ENCODE measurements at regions of chr11 and their contacts with region 1.

Region 1: GRCh38 chr11:76860539-76861475 is at the start of gene ACER3:
- DNase-seq: peak; percentile 91
- H3K4me3 Mint-ChIP-seq: peak within 1 kb of the TSS; percentile 80
- H3K27ac Mint-ChIP-seq: no peak within 1 kb of the TSS
- H3K4me1 Mint-ChIP-seq: peaks cover 15% of the 10 kb centered on the region
- H3K27me3 Mint-ChIP-seq: no peaks in the 10 kb centered on the region
- total RNA-seq, gene ACER3: 10.5 to 10.9 TPM

Region 2: DNA sequence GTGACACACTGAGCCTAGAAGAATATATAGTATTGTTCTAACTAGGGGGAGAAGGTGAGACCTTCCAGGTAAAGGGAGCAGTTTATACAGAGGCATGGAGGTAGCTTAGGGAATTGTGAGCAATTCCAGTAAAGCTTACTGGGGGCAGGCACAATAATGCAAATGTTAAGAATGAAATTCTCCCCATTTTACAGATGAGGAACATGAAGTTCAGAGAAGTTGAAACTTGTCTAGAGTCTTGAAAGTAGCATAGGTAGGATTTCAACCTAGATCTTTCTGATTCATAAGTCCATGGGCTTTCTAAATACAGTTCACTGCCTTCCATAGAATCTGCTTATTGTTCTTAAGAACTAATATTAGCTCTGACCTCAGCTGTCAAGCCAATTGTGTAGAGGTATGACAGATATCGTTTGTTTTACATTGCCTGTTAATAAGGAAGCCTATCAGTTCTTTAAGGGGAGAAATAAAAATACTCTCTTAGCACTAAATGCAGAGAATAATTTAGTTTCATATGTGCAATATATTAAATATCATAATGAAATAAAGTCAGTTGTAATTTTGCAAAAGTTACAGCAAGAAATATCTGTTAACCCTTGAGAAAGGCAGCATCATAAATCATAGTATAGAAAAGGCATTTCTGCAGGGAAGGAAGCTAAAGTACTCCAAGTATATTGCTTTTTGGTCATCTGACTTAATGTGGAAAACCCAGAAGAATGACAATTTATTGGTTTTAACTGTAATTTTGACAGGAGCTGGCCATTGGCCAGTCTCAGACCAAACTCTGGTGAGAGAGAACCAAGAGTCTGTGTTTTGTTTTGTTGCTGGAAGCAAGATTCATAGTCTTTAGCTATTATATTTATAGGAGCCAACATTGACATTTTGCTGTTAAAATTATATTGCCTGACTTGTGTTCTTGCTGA is 864.0 kb before region 1 on chr11:
- CTCF ChIA-PET with region 1: no interaction called
- POLR2A ChIA-PET with region 1: no interaction called
- intact Hi-C with region 1: no loop called
- DNase-seq: no peak
- H3K4me3 Mint-ChIP-seq: no peak overlapping the region
- H3K27ac Mint-ChIP-seq: no peak overlapping the region
- H3K4me1 Mint-ChIP-seq: no peaks in the 10 kb centered on the region
- H3K27me3 Mint-ChIP-seq: no peaks in the 10 kb centered on the region

Region 3: GRCh38 chr11:76927160-76927559 is 66.4 kb after region 1 on chr11:
- CTCF ChIA-PET with region 1: no interaction called
- POLR2A ChIA-PET with region 1: no interaction called
- intact Hi-C with region 1: no loop called
- DNase-seq: no peak
- H3K4me3 Mint-ChIP-seq: no peak overlapping the region
- H3K27ac Mint-ChIP-seq: no peak overlapping the region
- H3K4me1 Mint-ChIP-seq: no peaks in the 10 kb centered on the region
- H3K27me3 Mint-ChIP-seq: no peaks in the 10 kb centered on the region

Region 4: GRCh38 chr11:77047007-77047927 is 186.5 kb after region 1 on chr11:
- CTCF ChIA-PET with region 1: no interaction called
- POLR2A ChIA-PET with region 1: no interaction called
- intact Hi-C with region 1: loop called (anchors 1 kb)
- DNase-seq: peak; percentile 81
- H3K4me3 Mint-ChIP-seq: peak overlapping the region; percentile 62
- H3K27ac Mint-ChIP-seq: peak overlapping the region; percentile 51
- H3K4me1 Mint-ChIP-seq: peaks cover 13% of the 10 kb centered on the region
- H3K27me3 Mint-ChIP-seq: peaks cover 6% of the 10 kb centered on the region

Region 5: GRCh38 chr11:77066229-77067042 is 205.6 kb after region 1 on chr11 and contains the start of gene CAPN5:
- CTCF ChIA-PET with region 1: no interaction called
- POLR2A ChIA-PET with region 1: no interaction called
- intact Hi-C with region 1: loop called (anchors 1 kb)
- DNase-seq: peak; percentile 88
- H3K4me3 Mint-ChIP-seq: peak within 1 kb of the TSS; percentile 71
- H3K27ac Mint-ChIP-seq: no peak within 1 kb of the TSS
- H3K4me1 Mint-ChIP-seq: peaks cover 4% of the 10 kb centered on the region
- H3K27me3 Mint-ChIP-seq: no peaks in the 10 kb centered on the region
- total RNA-seq, gene CAPN5: 0.88 to 1.1 TPM

Region 6: DNA sequence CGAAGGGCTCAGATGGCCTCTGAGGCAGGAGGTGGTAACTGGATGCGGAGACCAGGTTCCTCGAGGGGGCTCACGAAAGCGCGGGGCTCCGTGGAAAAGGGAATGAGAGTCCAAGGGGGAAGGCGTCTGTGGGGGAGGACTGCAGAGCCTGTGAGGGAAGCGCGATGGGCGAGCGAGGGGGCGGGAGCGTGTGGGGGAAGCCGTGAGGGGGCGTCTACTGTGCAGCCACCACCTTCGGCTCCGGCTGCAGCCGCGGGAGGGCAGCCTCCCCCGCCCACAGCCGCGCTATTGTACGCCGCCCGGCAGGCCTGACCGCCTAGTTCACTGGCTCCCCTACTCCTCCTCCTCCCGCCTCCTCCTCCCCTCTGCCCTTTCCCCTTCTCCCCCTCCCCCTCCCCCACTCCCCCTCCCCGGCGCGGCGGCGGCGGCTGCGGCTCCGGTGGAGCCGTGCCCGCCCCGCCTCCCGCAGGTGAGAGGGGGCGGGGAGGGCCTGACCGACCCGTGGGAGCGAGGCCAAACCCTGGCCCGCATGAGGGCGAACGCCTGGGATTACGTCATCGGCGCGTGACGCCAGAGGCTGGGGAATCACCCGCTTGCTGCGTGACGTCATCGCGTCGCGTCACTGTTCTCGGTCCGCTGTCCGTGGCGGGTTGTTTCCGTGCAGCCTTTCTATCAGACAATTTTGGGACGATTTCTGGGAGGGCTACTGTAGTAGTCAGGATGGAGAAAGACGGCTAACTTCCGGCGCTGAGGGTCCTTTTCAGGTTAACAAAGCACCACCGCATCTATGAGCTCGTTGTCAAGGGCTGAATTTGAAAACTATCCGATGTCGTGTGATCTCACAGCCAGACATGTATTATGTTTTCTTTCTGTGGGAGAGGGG is 613.2 kb after region 1 on chr11 and contains the start of gene PAK1:
- CTCF ChIA-PET with region 1: no interaction called
- POLR2A ChIA-PET with region 1: no interaction called
- intact Hi-C with region 1: loop called (anchors 5 kb)
- DNase-seq: peak; percentile 91
- H3K4me3 Mint-ChIP-seq: peak within 1 kb of the TSS; percentile 71
- H3K27ac Mint-ChIP-seq: peak within 1 kb of the TSS; percentile 38
- H3K4me1 Mint-ChIP-seq: peaks cover 5% of the 10 kb centered on the region
- H3K27me3 Mint-ChIP-seq: peaks cover 13% of the 10 kb centered on the region
- total RNA-seq, gene PAK1: 30.4 to 33.1 TPM